MCF 10A (cell line): ENCODE measurements at regions of chr4 and their contacts with region 1.

Region 1: GRCh38 chr4:42371306-42372252 is 25.7 kb upstream of the SHISA3 start:
- DNase-seq: peak; percentile 59
- H3K4me3 Mint-ChIP-seq: no peak overlapping the region
- H3K27ac Mint-ChIP-seq: no peak overlapping the region
- H3K4me1 Mint-ChIP-seq: no peaks in the 10 kb centered on the region
- H3K27me3 Mint-ChIP-seq: no peaks in the 10 kb centered on the region
- CTCF ChIP-seq: peak; percentile 46

Region 2: GRCh38 chr4:42359711-42360110 is 11.9 kb before region 1 on chr4:
- CTCF ChIA-PET with region 1: interaction called, 33 read pairs
- POLR2A ChIA-PET with region 1: no interaction called
- intact Hi-C with region 1: no loop called
- DNase-seq: no peak
- H3K4me3 Mint-ChIP-seq: peak overlapping the region; percentile 30
- H3K27ac Mint-ChIP-seq: no peak overlapping the region
- H3K4me1 Mint-ChIP-seq: peaks cover 6% of the 10 kb centered on the region
- H3K27me3 Mint-ChIP-seq: no peaks in the 10 kb centered on the region
- CTCF ChIP-seq: no peak

Region 3: DNA sequence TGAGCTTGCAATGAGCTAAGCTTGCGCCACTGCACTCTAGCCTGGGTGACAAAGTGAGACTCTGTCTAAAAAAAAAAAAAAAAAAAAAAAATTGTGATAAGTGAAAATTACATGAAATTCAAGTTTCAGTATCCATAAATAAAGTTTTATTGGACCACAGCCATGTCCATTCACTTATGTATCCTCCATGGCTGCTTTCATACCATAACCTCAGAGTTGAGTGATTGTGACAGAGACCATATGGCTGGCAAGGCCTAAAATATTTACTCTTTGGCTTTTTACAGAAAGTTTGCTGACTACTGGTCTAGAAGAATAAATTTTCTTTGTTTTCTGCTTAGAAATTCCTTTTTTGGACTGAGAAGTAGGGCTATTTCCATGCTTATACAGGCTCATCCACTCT is 13.9 kb after region 1 on chr4:
- CTCF ChIA-PET with region 1: interaction called, 14 read pairs
- POLR2A ChIA-PET with region 1: no interaction called
- intact Hi-C with region 1: no loop called
- DNase-seq: no peak
- H3K4me3 Mint-ChIP-seq: no peak overlapping the region
- H3K27ac Mint-ChIP-seq: no peak overlapping the region
- H3K4me1 Mint-ChIP-seq: no peaks in the 10 kb centered on the region
- H3K27me3 Mint-ChIP-seq: no peaks in the 10 kb centered on the region
- CTCF ChIP-seq: no peak

Region 4: DNA sequence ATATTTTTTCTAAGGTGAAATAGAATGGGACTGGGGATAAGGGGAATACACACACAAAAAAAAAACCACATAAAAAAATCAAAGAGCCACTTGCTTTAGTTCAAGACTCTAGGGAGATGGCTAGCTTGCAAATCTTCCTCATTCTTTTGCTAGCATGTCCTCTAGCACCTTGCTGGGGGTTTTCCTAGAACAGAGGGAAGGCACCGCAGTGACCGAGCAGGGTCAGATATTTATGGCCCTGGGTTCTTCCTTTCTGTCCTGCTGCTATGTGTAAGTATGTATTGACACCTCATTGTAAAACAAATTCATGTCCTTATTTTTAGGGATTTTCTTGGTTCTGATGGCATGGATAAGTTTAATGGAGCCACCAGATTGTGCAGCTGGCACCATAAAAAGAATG is 106.9 kb after region 1 on chr4:
- CTCF ChIA-PET with region 1: interaction called, 10 read pairs
- POLR2A ChIA-PET with region 1: no interaction called
- intact Hi-C with region 1: no loop called
- DNase-seq: no peak
- H3K4me3 Mint-ChIP-seq: no peak overlapping the region
- H3K27ac Mint-ChIP-seq: no peak overlapping the region
- H3K4me1 Mint-ChIP-seq: peaks cover 12% of the 10 kb centered on the region
- H3K27me3 Mint-ChIP-seq: no peaks in the 10 kb centered on the region
- CTCF ChIP-seq: no peak

Region 5: DNA sequence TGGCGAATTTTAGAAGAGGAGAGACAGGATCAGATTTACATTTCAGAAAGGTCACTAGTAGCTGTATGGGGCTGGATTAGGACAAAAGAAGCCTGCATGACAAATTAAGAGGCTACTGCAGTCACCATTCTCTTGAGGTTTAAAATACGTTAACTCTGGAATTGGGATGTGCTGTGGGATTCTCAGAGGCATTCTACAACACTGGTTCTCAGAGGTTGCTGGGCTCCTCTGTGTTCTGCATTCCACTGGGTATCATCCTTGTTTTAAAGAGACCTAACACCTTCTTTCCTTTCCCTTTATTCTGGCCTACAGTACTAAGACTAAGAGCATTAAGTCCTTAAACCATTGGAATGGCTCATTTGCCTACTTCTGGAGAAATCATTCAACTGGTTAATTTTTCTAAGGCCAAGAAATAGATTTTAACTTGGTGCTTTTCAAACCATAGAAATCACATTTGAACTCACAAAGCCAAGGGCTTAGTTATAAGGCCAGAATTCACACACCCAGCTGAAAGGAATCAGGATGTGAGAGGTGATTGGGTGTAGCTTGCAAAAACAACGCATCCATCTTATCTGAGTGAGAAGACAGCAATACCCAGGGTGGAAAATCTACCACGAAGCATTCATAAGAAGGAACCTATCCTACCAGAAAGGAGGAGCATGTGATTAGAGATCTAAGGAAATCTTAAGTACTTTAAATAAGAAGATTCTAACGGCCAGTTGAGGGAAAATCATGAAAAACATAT is 142.3 kb after region 1 on chr4:
- CTCF ChIA-PET with region 1: interaction called, 220 read pairs
- POLR2A ChIA-PET with region 1: interaction called, 4 read pairs
- intact Hi-C with region 1: loop called (anchors 1 kb)
- DNase-seq: no peak
- H3K4me3 Mint-ChIP-seq: no peak overlapping the region
- H3K27ac Mint-ChIP-seq: no peak overlapping the region
- H3K4me1 Mint-ChIP-seq: no peaks in the 10 kb centered on the region
- H3K27me3 Mint-ChIP-seq: no peaks in the 10 kb centered on the region
- CTCF ChIP-seq: no peak

Region 6: DNA sequence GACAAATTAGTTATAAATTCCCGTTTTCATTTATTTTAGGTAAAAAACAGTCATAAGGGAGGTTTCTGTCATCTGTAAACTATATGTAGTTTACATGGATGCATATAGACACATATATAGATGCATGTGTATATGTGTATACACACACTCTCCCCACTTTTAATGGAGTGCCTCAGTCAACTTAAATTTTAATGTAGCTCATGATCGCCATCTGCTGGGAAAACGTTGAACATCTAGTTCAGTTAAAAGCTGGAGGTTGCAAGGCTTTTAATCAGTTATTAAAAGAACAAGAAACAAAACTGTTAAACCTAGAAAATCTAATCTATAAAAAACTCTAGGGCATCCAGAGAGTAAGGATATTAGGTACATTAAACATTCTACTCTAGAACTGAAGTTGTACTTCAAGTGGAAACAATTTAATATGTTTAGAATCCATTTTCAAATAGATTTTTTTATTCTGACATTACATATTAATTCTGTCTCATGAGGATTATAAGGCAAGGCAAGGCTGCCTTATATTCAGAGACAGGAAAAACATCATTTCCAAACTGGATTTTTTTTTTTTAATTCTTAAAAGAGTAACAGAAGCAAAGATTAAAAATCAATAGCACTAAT is 148.3 kb after region 1 on chr4:
- CTCF ChIA-PET with region 1: interaction called, 220 read pairs
- POLR2A ChIA-PET with region 1: interaction called, 5 read pairs
- intact Hi-C with region 1: loop called (anchors 1 kb)
- DNase-seq: peak; percentile 59
- H3K4me3 Mint-ChIP-seq: no peak overlapping the region
- H3K27ac Mint-ChIP-seq: no peak overlapping the region
- H3K4me1 Mint-ChIP-seq: peaks cover 4% of the 10 kb centered on the region
- H3K27me3 Mint-ChIP-seq: no peaks in the 10 kb centered on the region
- CTCF ChIP-seq: peak; percentile 40